Gastrocnemius medialis (tissue), 4 donors: ENCODE measurements at regions of chr9 and their contacts with region 1.

Region 1: DNA sequence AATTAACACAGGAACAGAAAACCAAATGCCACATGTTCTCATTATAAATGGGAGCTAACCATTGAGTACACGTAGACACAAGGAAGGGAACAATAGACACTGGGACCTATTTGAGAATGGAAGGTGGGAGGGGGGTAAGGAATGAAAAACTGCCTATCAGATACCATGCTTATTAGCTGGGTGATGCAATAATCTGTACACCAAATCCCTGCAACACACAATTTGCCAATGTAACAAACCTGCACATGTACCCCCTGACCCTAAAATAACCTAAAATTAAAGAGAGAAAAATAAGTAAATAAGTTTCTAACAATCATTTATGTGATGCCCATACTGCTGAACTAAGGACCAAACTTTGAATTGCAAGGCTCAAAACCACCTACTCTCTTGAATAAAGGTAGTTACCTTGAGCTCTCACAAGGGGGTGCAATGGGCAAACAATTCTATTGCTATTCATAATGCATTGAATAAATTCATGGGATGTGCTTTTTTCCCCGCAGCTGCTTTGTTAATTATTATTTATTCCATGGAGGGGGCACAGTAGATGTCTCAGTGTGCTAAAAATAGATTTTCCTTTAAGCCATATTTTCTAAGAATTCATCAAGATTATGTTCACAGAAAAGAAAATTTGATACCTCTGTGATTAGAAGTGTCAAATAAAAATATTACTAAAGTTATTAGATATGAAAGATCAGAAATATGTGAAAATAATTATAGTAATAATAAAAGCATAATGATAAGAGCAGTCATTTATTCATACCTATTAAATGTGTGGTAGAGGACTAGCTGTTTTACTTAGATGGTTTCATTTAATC is 76.2 kb upstream of the PTPN3 start:
- DNase-seq: peak in 1 of 2 donors; percentile 10
- ATAC-seq: peak; percentile 60 to 82
- H3K4me3 ChIP-seq: no peak overlapping the region
- H3K27ac ChIP-seq: no peak overlapping the region
- H3K4me1 ChIP-seq: no peaks in the 10 kb centered on the region
- H3K27me3 ChIP-seq: no peaks in the 10 kb centered on the region
- CTCF ChIP-seq: peak; percentile 39 to 68 (median 65)
- POLR2A ChIP-seq: no peak

Region 2: DNA sequence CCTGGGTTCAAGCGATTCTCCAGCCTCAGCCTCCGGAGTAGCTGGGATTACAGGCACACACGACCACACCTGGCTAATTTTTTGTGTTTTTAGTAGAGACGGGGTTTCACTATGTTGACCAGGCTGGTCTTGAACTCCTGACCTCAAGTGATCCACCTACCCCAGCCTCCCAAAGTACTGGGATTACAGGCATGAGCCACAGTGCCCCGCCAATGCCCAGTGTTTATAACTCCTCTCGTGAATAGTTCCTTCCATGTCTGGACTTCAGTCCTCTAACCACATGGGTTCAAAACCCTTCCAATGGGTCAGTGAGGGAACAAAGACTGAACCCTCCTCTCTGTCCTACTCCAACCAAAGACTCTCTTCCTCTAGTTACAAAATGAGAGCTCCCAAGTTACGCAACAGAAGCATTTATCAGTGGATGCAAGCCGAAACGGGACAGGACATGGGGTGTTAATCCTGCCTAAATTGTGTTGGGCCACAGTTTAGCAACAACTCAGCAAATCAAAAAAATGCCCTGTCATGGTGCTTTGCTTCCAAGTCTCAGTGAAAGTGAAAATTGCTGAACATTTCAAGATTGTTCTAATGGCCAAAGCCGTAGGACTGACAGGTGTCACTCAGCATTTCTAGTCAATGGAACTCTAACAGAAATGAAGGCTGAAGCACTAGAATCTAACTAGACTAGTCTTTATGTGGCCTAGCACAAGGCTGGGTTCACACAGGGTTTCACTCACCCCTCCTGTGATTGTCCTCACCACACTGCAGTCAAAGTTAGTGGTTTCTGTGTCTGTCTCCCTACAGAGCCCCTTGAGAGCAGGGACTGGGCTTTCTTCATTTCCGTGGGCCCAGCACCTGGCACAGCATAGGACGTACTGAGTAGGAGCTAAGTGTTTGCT is 451.3 kb before region 1 on chr9:
- in situ Hi-C with region 1: no loop called
- intact Hi-C with region 1: no loop called
- DNase-seq: no peak
- ATAC-seq: no peak
- H3K4me3 ChIP-seq: no peak overlapping the region
- H3K27ac ChIP-seq: no peak overlapping the region
- H3K4me1 ChIP-seq: peaks cover 9 to 14% of the 10 kb centered on the region in 2 donors
- H3K27me3 ChIP-seq: no peaks in the 10 kb centered on the region
- CTCF ChIP-seq: no peak
- POLR2A ChIP-seq: no peak

Region 3: GRCh38 chr9:109422641-109423040 is 151.6 kb before region 1 on chr9:
- in situ Hi-C with region 1: no loop called
- intact Hi-C with region 1: no loop called
- DNase-seq: no peak
- ATAC-seq: no peak
- H3K4me3 ChIP-seq: no peak overlapping the region
- H3K27ac ChIP-seq: peak overlapping the region; percentile 90 to 95 (median 92)
- H3K4me1 ChIP-seq: peaks cover 34 to 52% of the 10 kb centered on the region in 2 donors
- H3K27me3 ChIP-seq: no peaks in the 10 kb centered on the region
- CTCF ChIP-seq: no peak
- POLR2A ChIP-seq: no peak

Region 4: GRCh38 chr9:109542906-109543305 is 31.4 kb before region 1 on chr9:
- in situ Hi-C with region 1: no loop called
- intact Hi-C with region 1: no loop called
- DNase-seq: no peak
- ATAC-seq: no peak
- H3K4me3 ChIP-seq: no peak overlapping the region
- H3K27ac ChIP-seq: no peak overlapping the region
- H3K4me1 ChIP-seq: no peaks in the 10 kb centered on the region
- H3K27me3 ChIP-seq: no peaks in the 10 kb centered on the region
- CTCF ChIP-seq: no peak
- POLR2A ChIP-seq: no peak

Region 5: DNA sequence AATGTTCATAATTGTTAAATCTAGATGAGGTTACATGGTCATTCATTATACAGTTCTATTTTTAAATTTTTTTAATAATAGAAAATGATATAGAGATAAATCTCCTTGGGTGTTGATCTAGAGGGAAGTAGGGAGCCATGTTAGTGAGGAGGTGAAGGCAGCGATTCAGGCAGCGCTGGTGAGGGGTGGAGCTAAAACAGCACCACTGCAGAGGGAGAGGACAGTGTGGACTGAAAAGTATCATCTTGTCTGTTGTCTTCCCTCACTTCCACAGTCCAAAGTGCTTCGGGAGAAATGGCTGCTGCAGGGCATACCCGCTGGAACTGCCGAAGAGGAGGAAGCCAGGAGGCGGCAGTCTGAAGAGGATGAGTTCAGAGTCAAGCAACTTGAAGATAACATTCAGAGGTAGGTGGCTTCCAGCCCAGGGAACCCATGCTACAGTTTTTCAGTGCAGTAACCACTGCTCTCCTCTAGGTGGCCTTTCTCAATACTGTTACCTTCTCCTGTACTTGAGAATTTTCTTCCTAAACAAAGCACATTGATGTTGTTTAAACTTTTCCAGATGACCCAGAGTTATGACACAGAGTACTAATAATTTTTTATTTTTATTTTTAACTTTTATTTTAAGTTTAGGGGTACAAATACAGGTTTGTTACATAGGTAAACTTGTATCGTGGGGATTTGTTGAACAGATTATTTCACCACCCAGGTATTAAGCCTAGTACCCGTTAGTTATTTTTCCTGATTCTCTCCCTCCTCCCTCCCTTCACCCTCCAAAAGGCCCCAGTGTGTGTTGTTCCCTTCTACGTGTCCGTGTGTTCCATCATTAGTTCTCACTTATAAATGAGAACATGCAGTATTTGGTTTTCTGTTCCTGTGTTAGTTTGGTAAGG is 306.2 kb after region 1 on chr9:
- in situ Hi-C with region 1: loop called in 2 of 4 experiments (anchors 25 kb)
- intact Hi-C with region 1: loop called (anchors 5 kb)
- DNase-seq: no peak
- ATAC-seq: no peak
- H3K4me3 ChIP-seq: no peak overlapping the region
- H3K27ac ChIP-seq: no peak overlapping the region
- H3K4me1 ChIP-seq: peaks cover 0 to under 1% of the 10 kb centered on the region in 2 donors
- H3K27me3 ChIP-seq: no peaks in the 10 kb centered on the region
- CTCF ChIP-seq: peak in 4 of 5 experiments; percentile 14 to 53 (median 36)
- POLR2A ChIP-seq: no peak

Region 6: DNA sequence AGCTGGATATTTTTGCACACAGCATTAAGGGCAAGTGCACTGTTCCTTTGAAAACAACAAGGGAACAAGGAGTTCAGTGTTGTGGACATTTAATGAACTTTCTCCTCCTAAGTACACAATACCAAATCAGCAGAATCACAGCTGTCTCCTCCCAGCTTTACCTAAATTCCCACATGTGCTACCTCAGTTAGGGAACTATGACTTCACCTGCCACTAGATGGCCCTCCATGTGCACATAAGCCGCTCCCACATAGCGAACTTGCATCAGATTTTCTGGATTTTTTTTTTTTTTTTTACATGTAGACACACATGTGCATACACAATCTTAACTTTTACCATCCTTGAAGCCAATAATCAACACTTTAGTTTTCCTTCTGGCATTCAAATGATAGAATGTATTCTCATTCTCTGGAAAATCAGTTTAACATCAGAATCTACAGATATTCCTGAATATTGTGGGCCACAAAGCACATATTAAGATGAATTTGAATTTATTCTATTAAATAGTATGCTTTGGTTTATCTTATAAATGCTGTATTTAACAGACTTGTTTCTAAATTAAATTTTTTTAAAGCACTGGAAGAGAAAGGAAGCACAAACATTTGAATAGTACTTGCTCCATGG is 329.4 kb after region 1 on chr9:
- in situ Hi-C with region 1: loop called in 2 of 4 experiments (anchors 25 kb)
- intact Hi-C with region 1: loop called (anchors 5 kb)
- DNase-seq: peak in 1 of 2 donors; percentile 45
- ATAC-seq: peak; percentile 51 to 59
- H3K4me3 ChIP-seq: no peak overlapping the region
- H3K27ac ChIP-seq: peak overlapping the region in 2 of 4 donors; percentile 7 to 21
- H3K4me1 ChIP-seq: peaks cover 17 to 49% of the 10 kb centered on the region in 2 donors
- H3K27me3 ChIP-seq: no peaks in the 10 kb centered on the region
- CTCF ChIP-seq: peak; percentile 73 to 83 (median 82)
- POLR2A ChIP-seq: no peak

Region 7: DNA sequence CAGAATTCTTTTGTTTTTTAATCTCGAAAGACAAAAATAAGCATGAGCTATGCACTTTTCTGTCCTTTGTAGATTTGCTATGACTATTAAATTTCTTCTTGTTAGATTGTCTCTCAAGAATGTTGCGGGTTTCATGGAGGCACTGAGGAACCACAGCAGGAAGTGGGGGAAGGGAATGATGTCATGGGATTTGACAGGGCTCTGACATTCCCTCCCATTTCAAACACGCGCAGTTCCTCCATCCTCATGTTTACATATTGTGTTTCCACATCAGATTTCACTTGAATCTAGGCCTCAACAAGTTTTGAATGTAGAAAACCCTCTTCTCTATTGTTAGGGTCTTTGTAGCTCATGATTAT is 360.6 kb after region 1 on chr9:
- in situ Hi-C with region 1: no loop called
- intact Hi-C with region 1: no loop called
- DNase-seq: no peak
- ATAC-seq: no peak
- H3K4me3 ChIP-seq: no peak overlapping the region
- H3K27ac ChIP-seq: no peak overlapping the region
- H3K4me1 ChIP-seq: no peaks in the 10 kb centered on the region
- H3K27me3 ChIP-seq: no peaks in the 10 kb centered on the region
- CTCF ChIP-seq: no peak
- POLR2A ChIP-seq: no peak

Region 8: DNA sequence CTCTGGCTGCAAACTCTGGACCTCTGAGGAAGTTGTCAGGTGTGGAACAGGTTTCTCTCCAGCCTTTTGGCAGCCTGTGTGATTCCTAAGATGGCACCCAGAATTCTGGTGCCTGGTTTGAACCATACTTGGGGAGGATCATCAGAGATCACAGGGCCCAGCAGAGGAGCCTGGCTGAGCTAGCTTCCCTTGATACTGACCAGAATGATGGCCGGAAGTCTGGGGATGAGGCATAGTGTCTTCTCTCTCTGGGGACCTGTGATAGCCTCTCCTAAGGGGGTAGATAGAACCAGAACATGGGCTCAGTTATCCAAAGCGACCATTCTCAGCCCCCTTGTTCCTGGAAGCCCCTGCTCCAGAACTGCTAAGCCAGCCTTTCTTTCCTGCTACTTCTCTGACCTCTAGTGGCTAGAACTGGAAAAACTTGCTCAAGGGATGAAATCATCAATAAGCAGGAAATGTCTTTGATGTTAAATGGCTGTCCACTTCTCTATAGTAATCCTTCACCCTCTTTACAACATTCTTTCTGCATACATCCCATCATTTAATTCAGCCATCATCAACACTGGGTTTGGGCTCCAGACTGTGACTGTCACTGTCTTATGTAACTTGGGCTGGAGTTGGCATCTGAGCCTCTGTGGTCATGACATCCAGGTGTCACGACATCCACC is 578.6 kb after region 1 on chr9:
- in situ Hi-C with region 1: loop called in 2 of 4 experiments (anchors 10 to 25 kb)
- intact Hi-C with region 1: loop called (anchors 5 kb)
- DNase-seq: no peak
- ATAC-seq: no peak
- H3K4me3 ChIP-seq: no peak overlapping the region
- H3K27ac ChIP-seq: peak overlapping the region in 2 of 4 donors; percentile 22 to 29
- H3K4me1 ChIP-seq: peaks cover 13 to 16% of the 10 kb centered on the region in 2 donors
- H3K27me3 ChIP-seq: no peaks in the 10 kb centered on the region
- CTCF ChIP-seq: peak; percentile 53 to 71 (median 62)
- POLR2A ChIP-seq: no peak